ENCODE measurements at regions of chrX and their contacts with region 1.

Region 1: GRCh38 chrX:40647307-40648197 is at the start of gene CXorf38:
- DNase-seq: peak; percentile 86 to 99 (median 95)
- ATAC-seq: peak; percentile 85
- H3K4me3 ChIP-seq: peak within 1 kb of the TSS; percentile 73
- H3K4me3 Mint-ChIP-seq: peak within 1 kb of the TSS; percentile 89 to 96 (median 94)
- H3K27ac ChIP-seq: peak within 1 kb of the TSS; percentile 89
- H3K27ac Mint-ChIP-seq: peak within 1 kb of the TSS; percentile 88 to 99 (median 95)
- H3K4me1 ChIP-seq: peaks cover 3 to 19% of the 10 kb centered on the region in 2 donors
- H3K4me1 Mint-ChIP-seq: peaks cover 16 to 51% (median 31%) of the 10 kb centered on the region in 7 donors
- H3K27me3 ChIP-seq: no peaks in the 10 kb centered on the region
- H3K27me3 Mint-ChIP-seq: no peaks in the 10 kb centered on the region
- total RNA-seq, gene CXorf38: 15.0 to 25.4 (median 22.2) TPM

Region 2: GRCh38 chrX:39645178-39645895 is 1002.2 kb before region 1 on chrX:
- CTCF ChIA-PET with region 1: no interaction called
- POLR2A ChIA-PET with region 1: no interaction called
- intact Hi-C with region 1: no loop called
- DNase-seq: peak in 1 of 9 donors; percentile 28
- ATAC-seq: no peak
- H3K4me3 ChIP-seq: no peak overlapping the region
- H3K4me3 Mint-ChIP-seq: no peak overlapping the region
- H3K27ac ChIP-seq: no peak overlapping the region
- H3K27ac Mint-ChIP-seq: no peak overlapping the region
- H3K4me1 ChIP-seq: no peaks in the 10 kb centered on the region
- H3K4me1 Mint-ChIP-seq: peaks cover 0 to 2% (median 0%) of the 10 kb centered on the region in 7 donors
- H3K27me3 ChIP-seq: no peaks in the 10 kb centered on the region
- H3K27me3 Mint-ChIP-seq: no peaks in the 10 kb centered on the region

Region 3: DNA sequence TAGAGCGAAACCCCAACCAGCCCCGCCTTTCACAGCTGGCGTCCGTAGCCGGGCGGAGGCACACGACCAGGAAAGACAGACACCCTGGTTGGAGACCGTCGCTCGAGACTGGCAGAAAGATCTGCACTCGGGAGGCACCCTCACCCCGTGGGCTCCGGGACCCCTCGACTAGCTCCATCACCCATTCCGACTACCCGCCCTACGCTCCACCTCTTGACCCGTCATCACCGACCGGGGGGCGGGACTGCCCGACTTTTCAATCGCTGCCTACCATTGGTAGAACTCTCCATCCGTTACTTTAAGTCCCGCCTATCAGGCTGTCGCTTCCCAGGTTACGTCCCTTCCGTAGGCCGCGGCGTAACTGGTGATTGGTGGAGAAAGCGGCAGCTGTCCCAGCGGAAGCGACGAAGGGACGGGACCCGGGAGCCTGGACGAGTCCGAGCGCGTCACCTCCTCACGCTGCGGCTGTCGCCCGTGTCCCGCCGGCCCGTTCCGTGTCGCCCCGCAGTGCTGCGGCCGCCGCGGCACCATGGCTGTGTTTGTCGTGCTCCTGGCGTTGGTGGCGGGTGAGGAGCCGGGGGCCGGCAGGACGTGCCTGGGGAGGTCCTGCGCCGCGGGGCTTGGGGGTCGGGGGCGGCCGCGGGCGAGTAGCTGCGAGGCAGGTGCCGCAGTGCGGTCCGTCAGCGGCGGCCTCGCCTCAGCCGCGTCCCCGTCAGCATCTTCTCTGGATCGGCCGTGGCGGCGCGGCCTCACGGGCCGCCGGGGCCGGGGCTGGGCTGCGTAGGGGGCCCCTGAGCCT is 66.8 kb before region 1 on chrX and contains the start of gene ATP6AP2:
- CTCF ChIA-PET with region 1: interaction called, 3 read pairs
- POLR2A ChIA-PET with region 1: interaction called, 3 read pairs
- intact Hi-C with region 1: loop called (anchors 1 kb)
- DNase-seq: peak; percentile 60 to 91 (median 88)
- ATAC-seq: peak; percentile 96
- H3K4me3 ChIP-seq: peak within 1 kb of the TSS; percentile 81
- H3K4me3 Mint-ChIP-seq: peak within 1 kb of the TSS; percentile 92 to 98 (median 94)
- H3K27ac ChIP-seq: peak within 1 kb of the TSS; percentile 90
- H3K27ac Mint-ChIP-seq: peak within 1 kb of the TSS; percentile 87 to 96 (median 95)
- H3K4me1 ChIP-seq: peaks cover 13 to 16% of the 10 kb centered on the region in 2 donors
- H3K4me1 Mint-ChIP-seq: peaks cover 21 to 38% (median 34%) of the 10 kb centered on the region in 7 donors
- H3K27me3 ChIP-seq: no peaks in the 10 kb centered on the region
- H3K27me3 Mint-ChIP-seq: no peaks in the 10 kb centered on the region
- total RNA-seq, gene ATP6AP2: 72.0 to 98.6 (median 82.5) TPM

Region 4: GRCh38 chrX:40792433-40792832 is 144.9 kb after region 1 on chrX:
- CTCF ChIA-PET with region 1: interaction called, 37 read pairs
- POLR2A ChIA-PET with region 1: no interaction called
- intact Hi-C with region 1: loop called (anchors 1 kb)
- DNase-seq: no peak
- ATAC-seq: no peak
- H3K4me3 ChIP-seq: no peak overlapping the region
- H3K4me3 Mint-ChIP-seq: no peak overlapping the region
- H3K27ac ChIP-seq: no peak overlapping the region
- H3K27ac Mint-ChIP-seq: no peak overlapping the region
- H3K4me1 ChIP-seq: no peaks in the 10 kb centered on the region
- H3K4me1 Mint-ChIP-seq: peaks cover 0 to 6% (median 0%) of the 10 kb centered on the region in 7 donors
- H3K27me3 ChIP-seq: no peaks in the 10 kb centered on the region
- H3K27me3 Mint-ChIP-seq: peaks cover 0 to 9% (median 0%) of the 10 kb centered on the region in 5 donors

Region 5: GRCh38 chrX:41010188-41010846 is 362.8 kb after region 1 on chrX:
- CTCF ChIA-PET with region 1: no interaction called
- POLR2A ChIA-PET with region 1: no interaction called
- intact Hi-C with region 1: loop called in 1 of 2 experiments (anchors 1 kb)
- DNase-seq: peak; percentile 8 to 71 (median 59)
- ATAC-seq: peak; percentile 93
- H3K4me3 ChIP-seq: peak overlapping the region; percentile 32
- H3K4me3 Mint-ChIP-seq: peak overlapping the region; percentile 67 to 81 (median 76)
- H3K27ac ChIP-seq: peak overlapping the region; percentile 68
- H3K27ac Mint-ChIP-seq: peak overlapping the region; percentile 88 to 94 (median 91)
- H3K4me1 ChIP-seq: peaks cover 7% of the 10 kb centered on the region in 2 donors
- H3K4me1 Mint-ChIP-seq: peaks cover 13 to 30% (median 21%) of the 10 kb centered on the region in 7 donors
- H3K27me3 ChIP-seq: no peaks in the 10 kb centered on the region
- H3K27me3 Mint-ChIP-seq: peaks cover 0 to 3% (median 0%) of the 10 kb centered on the region in 5 donors

Region 6: DNA sequence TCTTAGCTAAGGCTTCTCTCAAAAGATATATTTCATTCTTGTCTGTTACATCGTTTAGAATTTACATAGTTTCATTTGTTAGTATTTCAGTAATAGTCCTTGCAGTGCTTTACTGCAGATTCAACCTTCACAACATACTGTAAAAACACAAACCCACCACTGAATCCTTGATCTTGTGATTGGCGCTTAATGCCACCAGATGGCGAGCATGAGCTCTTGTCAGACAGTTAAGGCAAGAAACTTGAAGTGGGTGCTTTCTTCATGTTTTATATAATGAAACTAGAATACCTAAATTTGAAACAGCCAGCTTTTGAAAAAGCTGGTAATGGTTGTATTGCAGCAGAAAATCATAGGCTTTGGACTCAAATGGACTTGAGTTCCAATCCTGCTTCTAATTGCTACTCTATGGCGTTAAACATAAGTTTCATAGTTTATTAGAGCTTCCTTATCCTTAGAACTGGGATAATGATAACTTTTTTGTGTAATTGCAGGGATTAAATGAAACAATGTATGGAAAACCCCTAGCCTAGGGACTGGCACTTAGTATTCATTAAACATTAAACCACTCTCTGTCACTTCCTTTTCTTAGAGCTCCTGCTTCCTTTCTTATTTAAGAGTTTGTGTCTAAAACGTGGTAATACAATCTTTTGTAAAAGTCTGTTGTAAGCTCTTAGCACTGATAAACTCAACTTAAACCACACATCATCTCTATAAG is 532.8 kb after region 1 on chrX:
- CTCF ChIA-PET with region 1: no interaction called
- POLR2A ChIA-PET with region 1: no interaction called
- intact Hi-C with region 1: loop called in 1 of 2 experiments (anchors 2 kb)
- DNase-seq: peak in 8 of 9 donors; percentile 22 to 64 (median 46)
- ATAC-seq: peak; percentile 80
- H3K4me3 ChIP-seq: no peak overlapping the region
- H3K4me3 Mint-ChIP-seq: peak overlapping the region in 3 of 10 donors; percentile 19 to 58 (median 42)
- H3K27ac ChIP-seq: no peak overlapping the region
- H3K27ac Mint-ChIP-seq: peak overlapping the region in 7 of 9 donors; percentile 42 to 62 (median 56)
- H3K4me1 ChIP-seq: peaks cover 0 to 10% of the 10 kb centered on the region in 2 donors
- H3K4me1 Mint-ChIP-seq: peaks cover 23 to 63% (median 51%) of the 10 kb centered on the region in 7 donors
- H3K27me3 ChIP-seq: no peaks in the 10 kb centered on the region
- H3K27me3 Mint-ChIP-seq: no peaks in the 10 kb centered on the region

Region 7: DNA sequence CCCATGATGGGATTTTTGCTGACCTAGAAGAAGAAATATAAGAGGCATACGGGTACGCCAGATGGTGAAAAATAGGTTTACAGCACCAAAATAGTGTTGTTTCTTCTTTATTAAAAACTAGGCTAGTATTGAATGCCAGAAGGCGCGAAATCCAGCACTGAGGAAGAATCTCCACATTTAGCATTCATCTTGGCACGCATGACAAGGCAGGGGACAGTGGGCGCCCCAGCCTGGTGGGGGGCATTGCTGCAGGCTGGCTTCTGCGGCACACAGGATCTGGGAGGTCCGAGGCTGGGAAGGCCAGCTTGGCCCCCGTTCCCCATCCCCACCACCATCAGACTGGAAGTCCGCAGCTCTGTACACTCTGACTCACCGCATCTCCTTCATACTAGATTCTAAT is 610.7 kb after region 1 on chrX:
- CTCF ChIA-PET with region 1: no interaction called
- POLR2A ChIA-PET with region 1: no interaction called
- intact Hi-C with region 1: loop called (anchors 1 to 5 kb)
- DNase-seq: no peak
- ATAC-seq: no peak
- H3K4me3 ChIP-seq: no peak overlapping the region
- H3K4me3 Mint-ChIP-seq: no peak overlapping the region
- H3K27ac ChIP-seq: no peak overlapping the region
- H3K27ac Mint-ChIP-seq: no peak overlapping the region
- H3K4me1 ChIP-seq: no peaks in the 10 kb centered on the region
- H3K4me1 Mint-ChIP-seq: peaks cover 0 to 6% (median 3%) of the 10 kb centered on the region in 7 donors
- H3K27me3 ChIP-seq: no peaks in the 10 kb centered on the region
- H3K27me3 Mint-ChIP-seq: no peaks in the 10 kb centered on the region

Measured in naive thymus-derived CD4-positive, alpha-beta T cell (primary cell).